ENCODE measurements at regions of chr2 and their contacts with region 1.

Region 1: DNA sequence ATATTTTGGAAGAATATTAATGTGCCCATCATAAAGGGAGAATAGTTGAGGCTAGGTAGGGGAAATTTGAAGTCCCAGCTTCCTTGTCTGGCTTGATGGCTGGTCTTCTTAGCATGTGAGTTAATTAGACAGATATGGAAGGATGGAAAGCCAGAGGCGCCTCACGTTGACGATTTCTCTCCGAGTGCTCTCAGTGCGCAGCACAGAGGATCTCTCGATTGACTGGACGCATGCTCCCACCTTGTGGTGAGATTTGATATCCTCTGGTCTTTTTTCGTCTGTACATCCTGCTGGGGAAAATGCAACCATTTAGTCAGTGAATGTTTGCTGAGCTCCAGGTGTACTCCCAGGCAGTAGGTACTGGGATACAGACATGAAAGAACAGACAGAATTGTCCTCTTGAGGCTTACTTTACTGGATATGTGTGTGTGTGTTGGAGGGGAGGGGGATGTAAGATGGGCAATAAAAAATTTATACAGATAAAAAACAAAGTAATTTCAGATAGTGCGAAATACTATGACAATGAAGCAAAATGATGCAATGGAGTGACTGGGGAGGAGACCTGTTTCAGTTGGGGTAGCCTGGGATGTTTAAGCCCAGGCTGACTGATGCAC is 66.9 kb upstream of the ZNG1B start:
- DNase-seq: peak in 2 of 3 donors; percentile 47 to 85
- ATAC-seq: peak; percentile 99
- H3K4me3 ChIP-seq: no peak overlapping the region
- H3K4me1 ChIP-seq: no peaks in the 10 kb centered on the region
- CTCF ChIP-seq: no peak

Region 2: GRCh38 chr2:113138428-113139322 is 231.9 kb before region 1 on chr2:
- intact Hi-C with region 1: loop called in 1 of 2 experiments (anchors 10 kb)
- DNase-seq: peak in 2 of 3 donors; percentile 41 to 90
- ATAC-seq: peak; percentile 81
- H3K4me3 ChIP-seq: no peak overlapping the region
- H3K4me1 ChIP-seq: no peaks in the 10 kb centered on the region
- CTCF ChIP-seq: peak; percentile 61

Region 3: GRCh38 chr2:113248997-113249770 is 121.4 kb before region 1 on chr2:
- intact Hi-C with region 1: loop called (anchors 5 to 10 kb)
- DNase-seq: peak; percentile 72 to 91 (median 88)
- ATAC-seq: peak; percentile 90
- H3K4me3 ChIP-seq: no peak overlapping the region
- H3K4me1 ChIP-seq: no peaks in the 10 kb centered on the region
- CTCF ChIP-seq: peak; percentile 74